WTC11 (cell line): ENCODE measurements at regions of chr7 and their contacts with region 1.

Region 1: GRCh38 chr7:44534501-44534900 is 6.6 kb downstream of the NPC1L1 start:
- DNase-seq: peak; percentile 79
- ATAC-seq: peak; percentile 99
- H3K4me3 Mint-ChIP-seq: no peak overlapping the region
- H3K27ac Mint-ChIP-seq: no peak overlapping the region
- H3K4me1 Mint-ChIP-seq: no peaks in the 10 kb centered on the region
- H3K27me3 Mint-ChIP-seq: no peaks in the 10 kb centered on the region; the same call in 1 of the 2 replicates
- CTCF ChIP-seq: peak; percentile 75

Region 2: DNA sequence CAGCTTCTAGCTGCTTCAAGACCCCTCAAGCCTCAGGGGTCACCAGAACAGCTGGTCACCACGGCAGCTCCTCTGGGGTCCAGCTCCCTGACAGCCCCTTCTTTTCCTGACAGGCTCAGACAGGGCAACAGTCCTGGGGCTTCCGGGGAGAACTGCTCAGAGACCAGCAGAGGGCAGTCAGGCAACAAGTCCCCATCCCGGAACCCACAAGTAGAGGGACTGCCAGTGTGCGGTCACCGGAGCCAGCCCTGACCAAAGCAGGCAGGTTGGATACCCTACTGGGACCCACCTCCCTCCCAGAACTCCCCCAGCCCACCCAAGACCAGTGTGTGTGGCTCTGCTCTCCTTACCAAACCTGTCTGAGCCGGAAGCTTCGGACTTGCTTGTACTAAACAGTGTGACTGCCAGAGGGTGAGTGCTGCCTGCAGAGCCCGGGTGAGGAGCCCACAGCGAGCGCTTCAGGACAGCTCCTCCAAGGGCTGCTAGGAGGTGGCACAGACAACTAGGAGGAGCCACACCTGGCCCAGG is 293.5 kb before region 1 on chr7:
- CTCF ChIA-PET with region 1: interaction called, 12 read pairs
- POLR2A ChIA-PET with region 1: no interaction called
- DNase-seq: peak; percentile 77
- ATAC-seq: peak; percentile 89
- H3K4me3 Mint-ChIP-seq: no peak overlapping the region
- H3K27ac Mint-ChIP-seq: no peak overlapping the region
- H3K4me1 Mint-ChIP-seq: no peaks in the 10 kb centered on the region
- H3K27me3 Mint-ChIP-seq: no peaks in the 10 kb centered on the region; the same call in 1 of the 2 replicates
- CTCF ChIP-seq: no peak; the same call in 1 of the 2 replicates

Region 3: GRCh38 chr7:44322631-44323363 is 211.7 kb before region 1 on chr7:
- CTCF ChIA-PET with region 1: no interaction called
- POLR2A ChIA-PET with region 1: no interaction called
- DNase-seq: no peak
- ATAC-seq: no peak
- H3K4me3 Mint-ChIP-seq: 0 out of 2 replicates have a peak overlapping the region, but pooled peaks have one; percentile 69
- H3K27ac Mint-ChIP-seq: no peak overlapping the region
- H3K4me1 Mint-ChIP-seq: peaks cover 17% of the 10 kb centered on the region
- H3K27me3 Mint-ChIP-seq: peaks cover 54% of the 10 kb centered on the region
- CTCF ChIP-seq: no peak

Region 4: DNA sequence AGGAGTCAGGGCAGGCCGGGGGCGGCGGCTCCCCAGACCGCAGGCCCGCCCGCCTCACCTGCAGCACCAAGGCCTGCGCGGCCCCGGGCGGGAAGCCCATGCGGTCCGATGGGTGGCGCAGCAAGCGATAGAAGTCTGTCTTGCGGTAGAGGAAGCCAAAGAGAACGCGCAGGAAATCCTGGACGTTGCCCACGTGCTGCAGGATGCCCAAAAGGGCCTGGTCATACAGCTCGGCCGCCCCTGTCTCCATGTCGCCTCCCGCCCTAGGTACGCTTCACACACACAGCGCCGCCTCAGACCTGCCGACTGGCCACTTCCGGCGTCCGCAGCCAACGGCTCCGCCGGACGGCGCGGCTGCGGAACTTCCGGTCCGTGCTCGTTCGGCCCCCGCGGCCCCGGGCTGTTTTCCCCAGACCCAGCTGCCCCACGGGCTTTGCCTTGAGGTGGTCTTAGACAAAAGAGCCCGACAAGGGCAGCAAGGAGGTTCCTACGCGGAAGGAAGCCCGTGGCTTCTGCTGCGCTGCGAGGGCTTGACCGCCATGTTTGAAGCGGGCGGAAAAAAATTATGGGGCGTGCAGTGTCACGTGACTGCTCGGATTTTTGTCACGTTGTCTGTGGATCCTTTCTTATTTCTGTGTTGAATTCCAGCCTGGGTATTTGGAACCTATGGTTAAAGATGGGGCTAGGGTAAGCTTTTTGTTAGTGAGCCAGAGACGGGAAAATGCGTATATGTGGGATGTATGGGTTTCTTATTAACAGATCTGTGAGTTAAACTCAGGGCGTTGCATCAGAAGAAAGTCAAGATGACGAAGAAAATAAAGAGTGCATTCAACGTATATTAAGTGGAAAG is 43.9 kb before region 1 on chr7 and contains the start of gene NUDCD3:
- CTCF ChIA-PET with region 1: interaction called, 11 read pairs
- POLR2A ChIA-PET with region 1: no interaction called
- DNase-seq: peak; percentile 83
- ATAC-seq: peak; percentile 91
- H3K4me3 Mint-ChIP-seq: peak within 1 kb of the TSS; percentile 89
- H3K27ac Mint-ChIP-seq: peak within 1 kb of the TSS; percentile 99
- H3K4me1 Mint-ChIP-seq: peaks cover 22% of the 10 kb centered on the region
- H3K27me3 Mint-ChIP-seq: peaks cover 5% of the 10 kb centered on the region
- CTCF ChIP-seq: no peak
- total RNA-seq, gene NUDCD3: 71.8 to 83.9 TPM (median 82.7 TPM) in 3 replicates

Region 5: DNA sequence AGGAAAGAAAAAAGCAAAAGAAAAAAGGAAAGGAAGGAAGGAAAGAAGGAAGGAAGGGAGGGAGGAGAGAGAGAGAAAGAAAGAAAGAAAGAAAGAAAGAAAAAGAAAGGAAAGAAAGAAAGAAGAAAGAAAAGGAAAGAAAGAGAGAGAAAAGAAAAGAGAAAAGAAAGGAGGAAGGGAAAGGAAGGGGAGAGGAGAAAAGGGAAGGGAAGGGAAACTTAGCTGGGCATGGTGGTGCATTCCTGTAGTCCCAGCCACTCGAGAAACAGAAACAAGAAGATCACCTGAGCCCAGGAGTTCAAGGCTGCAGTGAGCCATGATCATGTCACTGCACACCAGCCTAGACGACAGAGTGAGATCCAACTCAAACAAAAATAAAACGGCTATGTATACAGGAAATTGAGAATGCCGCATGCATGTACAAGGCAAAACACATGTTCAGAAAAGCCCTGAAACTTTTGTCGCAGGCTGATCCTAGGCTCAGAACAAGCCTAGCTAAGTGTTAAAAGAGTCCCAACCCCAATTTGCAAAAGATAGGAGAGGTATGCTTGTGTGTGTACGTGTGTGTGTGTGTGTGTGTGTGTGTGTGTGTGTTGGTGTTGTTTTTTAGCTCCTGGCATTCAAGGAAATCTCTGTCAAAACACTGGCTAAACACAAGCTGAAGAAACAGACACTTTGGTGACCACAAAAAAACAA is 13.2 kb after region 1 on chr7:
- CTCF ChIA-PET with region 1: interaction called, 28 read pairs
- POLR2A ChIA-PET with region 1: no interaction called
- DNase-seq: no peak
- ATAC-seq: no peak
- H3K4me3 Mint-ChIP-seq: no peak overlapping the region
- H3K27ac Mint-ChIP-seq: no peak overlapping the region
- H3K4me1 Mint-ChIP-seq: peaks cover 8% of the 10 kb centered on the region
- H3K27me3 Mint-ChIP-seq: no peaks in the 10 kb centered on the region; the same call in 1 of the 2 replicates
- CTCF ChIP-seq: no peak

Region 6: GRCh38 chr7:44573464-44574286 is 39.2 kb after region 1 on chr7 and contains the start of gene DDX56:
- CTCF ChIA-PET with region 1: interaction called, 11 read pairs
- POLR2A ChIA-PET with region 1: interaction called, 3 read pairs
- DNase-seq: peak; percentile 91
- ATAC-seq: peak; percentile 97
- H3K4me3 Mint-ChIP-seq: peak within 1 kb of the TSS; percentile 89
- H3K27ac Mint-ChIP-seq: peak within 1 kb of the TSS; percentile 99
- H3K4me1 Mint-ChIP-seq: peaks cover 23% of the 10 kb centered on the region
- H3K27me3 Mint-ChIP-seq: no peaks in the 10 kb centered on the region
- CTCF ChIP-seq: no peak
- total RNA-seq, gene DDX56: 69.4 to 83.1 TPM (median 74.5 TPM) in 3 replicates